ENCODE measurements at regions of chr6 and their contacts with region 1.

Region 1: GRCh38 chr6:19472847-19473246 is 364.3 kb upstream of the ID4 start:
- DNase-seq: peak in 1 of 2 experiments; percentile 30
- H3K4me3 ChIP-seq: no peak overlapping the region
- H3K27ac ChIP-seq: no peak overlapping the region
- H3K4me1 ChIP-seq: peaks cover 25% of the 10 kb centered on the region
- H3K27me3 ChIP-seq: no peaks in the 10 kb centered on the region
- CTCF ChIP-seq: no peak

Region 2: DNA sequence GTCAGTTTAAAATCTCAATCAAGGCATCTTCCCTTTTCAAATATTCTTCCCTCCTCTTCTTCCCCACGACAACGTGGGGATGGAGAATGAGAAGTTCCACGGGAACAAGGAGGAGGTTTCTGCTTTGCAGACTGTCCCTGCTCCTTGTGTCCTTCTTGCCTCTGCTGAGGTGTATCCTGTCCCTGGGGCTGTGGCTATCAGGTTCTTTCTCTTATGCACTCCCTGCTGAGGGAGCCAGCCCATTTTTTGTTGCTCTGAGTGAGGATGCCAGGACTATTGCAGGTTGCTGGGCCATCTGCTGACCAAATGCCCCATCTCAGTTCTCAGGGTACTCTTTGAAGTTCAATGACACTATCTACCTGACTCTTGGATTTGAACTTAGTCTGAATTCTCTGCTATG is 552.1 kb before region 1 on chr6:
- CTCF ChIA-PET with region 1: no interaction called
- POLR2A ChIA-PET with region 1: no interaction called
- intact Hi-C with region 1: no loop called
- DNase-seq: no peak
- H3K4me3 ChIP-seq: no peak overlapping the region
- H3K27ac ChIP-seq: no peak overlapping the region
- H3K4me1 ChIP-seq: no peaks in the 10 kb centered on the region
- H3K27me3 ChIP-seq: no peaks in the 10 kb centered on the region
- CTCF ChIP-seq: no peak

Region 3: GRCh38 chr6:19024737-19025136 is 448.1 kb before region 1 on chr6:
- CTCF ChIA-PET with region 1: no interaction called
- POLR2A ChIA-PET with region 1: no interaction called
- intact Hi-C with region 1: loop called (anchors 5 kb)
- DNase-seq: peak; percentile 43
- H3K4me3 ChIP-seq: no peak overlapping the region
- H3K27ac ChIP-seq: no peak overlapping the region
- H3K4me1 ChIP-seq: no peaks in the 10 kb centered on the region
- H3K27me3 ChIP-seq: no peaks in the 10 kb centered on the region
- CTCF ChIP-seq: peak; percentile 67

Region 4: DNA sequence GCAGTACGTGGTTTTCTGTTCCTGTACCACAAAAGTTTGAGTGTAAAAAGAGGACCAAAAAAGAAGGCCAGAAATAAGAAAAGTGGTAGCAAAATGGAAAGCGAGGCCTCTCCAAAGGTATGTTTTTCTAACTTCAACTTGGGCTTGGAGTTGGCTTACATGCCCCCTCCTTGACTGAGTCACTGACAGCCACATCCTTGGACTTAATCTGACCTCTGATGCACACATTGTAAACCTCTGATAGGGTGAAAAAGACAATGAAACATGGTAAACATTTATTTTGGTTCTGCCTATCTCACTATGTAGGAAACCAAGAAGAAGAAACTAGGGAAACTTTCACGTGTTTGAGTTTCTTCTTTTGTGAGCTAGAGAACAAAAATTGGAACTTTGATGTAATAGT is 138.9 kb before region 1 on chr6:
- CTCF ChIA-PET with region 1: no interaction called
- POLR2A ChIA-PET with region 1: no interaction called
- intact Hi-C with region 1: loop called (anchors 10 kb)
- DNase-seq: peak in 1 of 2 experiments; percentile 43
- H3K4me3 ChIP-seq: no peak overlapping the region
- H3K27ac ChIP-seq: no peak overlapping the region
- H3K4me1 ChIP-seq: peaks cover 12% of the 10 kb centered on the region
- H3K27me3 ChIP-seq: no peaks in the 10 kb centered on the region
- CTCF ChIP-seq: no peak

Region 5: DNA sequence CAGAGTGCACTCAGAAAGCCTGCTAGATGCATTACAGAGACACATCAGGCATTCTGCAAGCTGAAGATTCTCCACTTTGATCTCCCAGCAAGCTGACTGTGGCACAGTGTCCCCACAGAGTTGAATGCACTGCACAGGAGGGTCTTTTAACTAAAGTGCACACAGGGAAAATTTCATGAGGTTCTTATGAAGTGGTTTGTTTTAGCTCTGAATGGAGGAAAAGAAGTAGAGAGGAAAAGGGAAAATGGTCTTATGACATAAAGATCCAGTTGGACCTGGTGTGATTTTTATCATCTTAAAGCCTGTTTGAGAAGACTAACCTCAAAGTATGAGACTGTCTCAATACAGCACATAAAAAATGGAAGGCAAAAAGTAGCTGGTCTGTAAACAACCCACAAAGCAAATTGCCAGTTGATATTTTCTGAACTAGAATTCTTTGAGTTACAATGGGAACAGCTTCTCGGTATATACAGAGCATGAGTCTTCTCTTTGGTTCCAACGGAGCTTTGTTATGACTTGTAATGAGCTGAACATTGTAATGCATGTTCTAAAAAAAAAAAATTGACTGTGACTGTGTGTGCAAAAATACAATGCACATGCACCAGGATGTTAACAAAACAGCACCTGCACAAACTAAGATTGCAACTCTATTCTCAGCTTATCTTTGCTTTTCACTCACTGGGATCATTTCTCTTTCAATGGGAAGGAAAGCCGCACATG is 18.7 kb before region 1 on chr6:
- CTCF ChIA-PET with region 1: no interaction called
- POLR2A ChIA-PET with region 1: no interaction called
- intact Hi-C with region 1: loop called (anchors 1 kb)
- DNase-seq: peak in 1 of 2 experiments; percentile 36
- H3K4me3 ChIP-seq: no peak overlapping the region
- H3K27ac ChIP-seq: no peak overlapping the region
- H3K4me1 ChIP-seq: peaks cover 22% of the 10 kb centered on the region
- H3K27me3 ChIP-seq: no peaks in the 10 kb centered on the region
- CTCF ChIP-seq: no peak

Region 6: GRCh38 chr6:19804205-19805123 is 331.6 kb after region 1 on chr6:
- CTCF ChIA-PET with region 1: no interaction called
- POLR2A ChIA-PET with region 1: no interaction called
- intact Hi-C with region 1: loop called (anchors 1 kb)
- DNase-seq: peak; percentile 77 to 97
- H3K4me3 ChIP-seq: peak overlapping the region; percentile 88
- H3K27ac ChIP-seq: no peak overlapping the region
- H3K4me1 ChIP-seq: peaks cover 10% of the 10 kb centered on the region; the same call in 1 of the 2 replicates
- H3K27me3 ChIP-seq: no peaks in the 10 kb centered on the region
- CTCF ChIP-seq: no peak

Measured in PC-9 (cell line).